ENCODE measurements at regions of chr17 and their contacts with region 1.

Region 1: GRCh38 chr17:21275579-21276263 is 8.8 kb upstream of the MAP2K3 start:
- DNase-seq: peak; percentile 97
- ATAC-seq: peak; percentile 82
- H3K4me3 Mint-ChIP-seq: peak overlapping the region; percentile 66
- H3K27ac Mint-ChIP-seq: peak overlapping the region; percentile 61
- H3K4me1 Mint-ChIP-seq: peaks cover 46% of the 10 kb centered on the region
- H3K27me3 Mint-ChIP-seq: no peaks in the 10 kb centered on the region

Region 2: GRCh38 chr17:20908373-20909273 is 367.1 kb before region 1 on chr17:
- CTCF ChIA-PET with region 1: no interaction called
- POLR2A ChIA-PET with region 1: no interaction called
- intact Hi-C with region 1: loop called in 1 of 2 experiments (anchors 5 kb)
- DNase-seq: peak; percentile 90
- ATAC-seq: peak; percentile 100
- H3K4me3 Mint-ChIP-seq: peak overlapping the region; percentile 65
- H3K27ac Mint-ChIP-seq: peak overlapping the region; percentile 76
- H3K4me1 Mint-ChIP-seq: peaks cover 3% of the 10 kb centered on the region
- H3K27me3 Mint-ChIP-seq: peaks cover 7% of the 10 kb centered on the region

Region 3: DNA sequence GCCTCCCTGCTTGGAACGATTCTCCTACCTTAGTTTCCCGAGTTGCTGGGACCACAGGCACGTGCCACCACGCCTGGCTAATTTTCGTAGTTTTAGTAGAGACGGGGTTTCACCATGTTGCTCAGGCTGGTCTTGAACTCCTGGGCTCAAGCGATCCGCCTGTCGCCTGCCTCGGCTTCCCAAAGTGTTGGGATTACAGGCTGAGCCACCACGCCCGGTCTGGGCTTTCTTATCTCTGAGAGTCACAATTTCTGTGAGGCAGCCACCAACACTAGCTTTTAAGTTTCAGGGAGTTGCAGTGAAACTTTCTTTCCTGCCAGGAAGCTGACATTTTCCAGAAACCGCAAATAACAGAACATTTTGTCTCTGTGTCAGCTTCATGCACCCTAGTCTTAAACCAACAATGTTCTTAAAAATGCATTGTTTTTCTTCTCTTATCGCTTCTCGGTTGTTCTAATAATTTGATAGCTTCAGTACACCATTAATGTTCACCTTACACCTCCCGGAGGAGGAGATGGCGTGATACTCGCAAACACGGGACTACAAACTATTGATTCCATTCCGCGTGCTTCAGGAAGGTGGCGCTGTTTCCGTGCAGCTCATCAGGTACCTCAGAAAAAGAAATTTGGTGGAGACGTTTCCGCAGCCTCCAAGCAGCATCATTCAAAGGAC is 156.3 kb before region 1 on chr17:
- CTCF ChIA-PET with region 1: interaction called, 7 read pairs
- POLR2A ChIA-PET with region 1: no interaction called
- intact Hi-C with region 1: loop called in 1 of 2 experiments (anchors 2 kb)
- DNase-seq: peak; percentile 83
- ATAC-seq: peak; percentile 95
- H3K4me3 Mint-ChIP-seq: peak overlapping the region; percentile 2
- H3K27ac Mint-ChIP-seq: peak overlapping the region; percentile 12
- H3K4me1 Mint-ChIP-seq: peaks cover 7% of the 10 kb centered on the region
- H3K27me3 Mint-ChIP-seq: peaks cover 2% of the 10 kb centered on the region

Region 4: GRCh38 chr17:21252796-21253645 is 22.7 kb before region 1 on chr17 and contains the start of gene NATD1:
- CTCF ChIA-PET with region 1: interaction called, 9 read pairs
- POLR2A ChIA-PET with region 1: no interaction called
- intact Hi-C with region 1: loop called in 1 of 2 experiments (anchors 1 kb)
- DNase-seq: peak; percentile 86
- ATAC-seq: peak; percentile 71
- H3K4me3 Mint-ChIP-seq: peak within 1 kb of the TSS; percentile 77
- H3K27ac Mint-ChIP-seq: peak within 1 kb of the TSS; percentile 47
- H3K4me1 Mint-ChIP-seq: peaks cover 6% of the 10 kb centered on the region
- H3K27me3 Mint-ChIP-seq: no peaks in the 10 kb centered on the region
- total RNA-seq, gene NATD1: 1.5 to 1.7 TPM

Region 5: GRCh38 chr17:21457051-21458026 is 181.6 kb after region 1 on chr17:
- CTCF ChIA-PET with region 1: interaction called, 9 read pairs
- POLR2A ChIA-PET with region 1: no interaction called
- intact Hi-C with region 1: loop called in 1 of 2 experiments (anchors 1 kb)
- DNase-seq: peak; percentile 96
- ATAC-seq: peak; percentile 92
- H3K4me3 Mint-ChIP-seq: no peak overlapping the region
- H3K27ac Mint-ChIP-seq: peak overlapping the region; percentile 67
- H3K4me1 Mint-ChIP-seq: peaks cover 21% of the 10 kb centered on the region
- H3K27me3 Mint-ChIP-seq: peaks cover 15% of the 10 kb centered on the region

Region 6: DNA sequence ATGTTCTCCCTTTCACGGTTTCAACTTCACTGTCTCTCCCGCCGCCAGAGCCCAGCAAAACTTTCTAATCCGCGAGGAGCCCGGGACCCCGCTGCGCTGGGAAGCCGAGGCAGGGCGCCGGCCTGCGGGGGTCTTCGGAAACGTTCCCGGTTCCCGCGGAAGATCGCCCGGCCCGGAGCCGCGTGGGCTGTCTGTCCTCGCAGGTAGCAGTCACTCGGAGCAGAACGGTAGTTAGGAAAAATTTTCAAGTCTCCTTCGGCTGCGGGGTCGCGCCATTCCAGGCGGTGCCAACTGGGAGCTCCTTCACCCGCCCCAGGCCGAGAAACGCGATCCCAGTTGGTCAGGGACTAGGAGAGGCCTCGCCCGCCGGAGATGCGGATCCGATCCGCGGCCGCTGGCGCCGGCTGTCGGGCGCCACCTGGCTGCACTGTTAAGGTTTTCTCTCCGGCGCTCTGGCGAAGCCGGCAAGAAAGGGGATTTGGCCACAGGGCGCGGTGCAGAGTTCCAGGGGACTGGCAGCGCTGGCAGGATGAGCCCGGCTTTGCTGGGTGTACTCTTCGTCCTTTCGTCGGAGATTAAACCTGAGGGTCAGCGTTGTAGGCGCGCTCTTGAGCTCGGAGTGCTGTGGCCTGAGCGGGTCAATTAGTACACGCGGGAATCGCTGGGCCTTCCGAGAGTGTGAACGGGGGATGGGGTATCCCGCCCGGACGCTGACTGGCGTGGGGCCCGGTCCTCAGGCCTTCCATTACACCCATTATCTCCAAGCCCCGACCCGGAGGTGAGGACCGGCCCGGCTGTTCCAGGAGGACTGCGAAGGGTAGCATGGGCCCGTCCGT is 235.9 kb after region 1 on chr17:
- CTCF ChIA-PET with region 1: interaction called, 14 read pairs
- POLR2A ChIA-PET with region 1: no interaction called
- intact Hi-C with region 1: loop called (anchors 1 kb)
- DNase-seq: peak; percentile 82
- ATAC-seq: peak; percentile 87
- H3K4me3 Mint-ChIP-seq: peak overlapping the region; percentile 60
- H3K27ac Mint-ChIP-seq: no peak overlapping the region
- H3K4me1 Mint-ChIP-seq: peaks cover 14% of the 10 kb centered on the region
- H3K27me3 Mint-ChIP-seq: peaks cover 31% of the 10 kb centered on the region

Measured in activated CD4-positive, alpha-beta T cell treated with anti-CD3 and anti-CD28 coated beads for 36 hours (primary cell).